Transverse colon (tissue), 4 donors: ENCODE measurements at regions of chr6 and their contacts with region 1.

Region 1: GRCh38 chr6:35776364-35777215 is at the start of gene CLPSL2:
- DNase-seq: no peak
- H3K4me3 ChIP-seq: peak within 1 kb of the TSS; percentile 6 to 51 (median 29)
- H3K27ac ChIP-seq: no peak within 1 kb of the TSS
- H3K4me1 ChIP-seq: peaks cover 0 to 8% (median 4%) of the 10 kb centered on the region in 4 donors
- H3K27me3 ChIP-seq: peaks cover 42% of the 10 kb centered on the region
- CTCF ChIP-seq: no peak
- EP300 ChIP-seq: no peak
- POLR2A ChIP-seq: no peak
- total RNA-seq, gene CLPSL2: not detected

Region 2: DNA sequence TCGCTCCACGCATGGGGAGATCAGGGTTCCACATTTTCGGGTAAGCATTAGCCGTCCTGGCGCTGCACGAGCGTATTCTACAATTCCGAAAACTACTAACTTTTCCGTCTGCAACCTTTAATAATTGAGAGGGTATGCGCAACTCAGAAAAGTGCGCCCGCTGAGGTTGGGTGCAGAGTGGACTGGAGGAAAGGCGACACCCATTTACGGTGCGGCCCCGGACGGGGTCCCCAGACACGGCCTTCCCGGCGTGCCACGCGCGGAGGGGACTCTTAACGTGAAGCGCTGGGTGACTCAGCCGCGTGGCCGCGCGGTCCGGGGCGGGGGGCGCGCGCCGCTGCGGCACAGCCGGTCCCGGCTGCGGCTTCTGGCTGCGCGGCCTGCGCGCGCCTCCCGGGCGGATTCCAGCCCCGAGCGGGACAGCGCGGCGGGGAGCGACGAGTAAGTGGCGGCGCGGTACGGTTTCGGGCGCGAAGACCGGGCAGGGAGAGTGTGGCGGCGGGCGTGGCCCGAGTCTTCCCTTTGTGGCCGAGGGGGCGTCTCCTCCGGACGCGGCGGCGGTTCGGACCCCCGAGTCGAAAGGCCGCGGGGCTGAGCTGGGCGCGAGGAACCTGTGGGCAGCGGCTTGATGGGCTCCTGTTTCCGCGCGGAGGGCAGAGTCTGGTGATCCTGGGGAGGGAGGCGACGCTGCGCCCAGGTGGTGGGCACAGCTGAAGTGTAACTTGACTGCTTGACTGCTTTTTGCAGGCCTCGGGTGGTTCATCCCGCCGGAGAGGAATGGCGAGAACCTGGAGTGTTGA is 666.3 kb after region 1 on chr6 and contains the starts of genes KCTD20 and PXT1:
- in situ Hi-C with region 1: no loop called
- intact Hi-C with region 1: no loop called
- DNase-seq: peak; percentile 91
- H3K4me3 ChIP-seq: peak within 1 kb of the TSS; percentile 63 to 89 (median 73)
- H3K27ac ChIP-seq: peak within 1 kb of the TSS; percentile 91 to 98 (median 96)
- H3K4me1 ChIP-seq: peaks cover 21 to 40% (median 31%) of the 10 kb centered on the region in 4 donors
- H3K27me3 ChIP-seq: no peaks in the 10 kb centered on the region
- CTCF ChIP-seq: no peak
- EP300 ChIP-seq: no peak
- POLR2A ChIP-seq: peak; percentile 69
- total RNA-seq, gene KCTD20: 23.2 to 61.9 (median 29.9) TPM
- total RNA-seq, gene PXT1: 0.14 TPM in 1 of 4 donors, not detected in the others

Region 3: GRCh38 chr6:37624986-37625574 is 1848.5 kb after region 1 on chr6:
- in situ Hi-C with region 1: loop called in 1 of 4 experiments (anchors 25 kb)
- intact Hi-C with region 1: no loop called
- DNase-seq: peak; percentile 77
- H3K4me3 ChIP-seq: peak overlapping the region in 2 of 4 donors; percentile 14 to 17
- H3K27ac ChIP-seq: no peak overlapping the region
- H3K4me1 ChIP-seq: peaks cover 5 to 11% (median 11%) of the 10 kb centered on the region in 4 donors
- H3K27me3 ChIP-seq: peaks cover 39% of the 10 kb centered on the region
- CTCF ChIP-seq: no peak
- EP300 ChIP-seq: no peak
- POLR2A ChIP-seq: no peak